ENCODE measurements at regions of chr7 and their contacts with region 1.

Region 1: GRCh38 chr7:34682089-34682488 is 24.1 kb downstream of the NPSR1 start:
- DNase-seq: no peak
- ATAC-seq: no peak
- H3K4me3 ChIP-seq: no peak overlapping the region
- H3K27ac ChIP-seq: no peak overlapping the region
- H3K4me1 ChIP-seq: no peaks in the 10 kb centered on the region
- H3K27me3 ChIP-seq: no peaks in the 10 kb centered on the region
- CTCF ChIP-seq: no peak
- EP300 ChIP-seq: no peak
- POLR2A ChIP-seq: no peak
- RAD21 ChIP-seq: no peak

Region 2: DNA sequence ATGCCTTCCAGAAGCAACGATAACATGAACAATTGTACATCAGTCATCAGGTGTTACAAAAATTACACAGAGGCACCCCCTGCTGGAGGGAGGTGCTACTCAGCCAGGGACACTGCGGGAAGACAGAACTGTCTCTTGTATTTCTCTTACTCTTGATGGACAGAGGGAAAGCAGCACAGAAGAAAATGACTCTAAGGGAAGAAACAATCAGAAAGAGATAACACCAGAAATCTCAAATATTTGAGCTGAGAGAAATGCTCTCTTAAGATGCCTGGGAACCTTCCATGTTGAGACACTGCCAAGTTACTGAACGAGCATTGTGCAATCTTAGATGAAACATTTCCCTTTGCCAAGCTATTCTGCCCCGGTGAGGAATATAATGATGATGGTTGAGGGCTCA is 251.6 kb before region 1 on chr7:
- CTCF ChIA-PET with region 1: no interaction called
- POLR2A ChIA-PET with region 1: no interaction called
- RAD21 ChIA-PET with region 1: no interaction called
- SMC1A ChIA-PET with region 1: no interaction called
- in situ Hi-C with region 1: no loop called
- intact Hi-C with region 1: no loop called
- DNase-seq: no peak
- ATAC-seq: peak; percentile 80
- H3K4me3 ChIP-seq: no peak overlapping the region
- H3K27ac ChIP-seq: no peak overlapping the region
- H3K4me1 ChIP-seq: no peaks in the 10 kb centered on the region
- H3K27me3 ChIP-seq: no peaks in the 10 kb centered on the region
- CTCF ChIP-seq: peak; percentile 18 to 61 (median 43); a peak in 3 of 6 replicates
- EP300 ChIP-seq: no peak
- POLR2A ChIP-seq: no peak
- RAD21 ChIP-seq: peak; percentile 47

Region 3: GRCh38 chr7:34544621-34545020 is 137.5 kb before region 1 on chr7:
- CTCF ChIA-PET with region 1: no interaction called
- POLR2A ChIA-PET with region 1: no interaction called
- RAD21 ChIA-PET with region 1: no interaction called
- SMC1A ChIA-PET with region 1: no interaction called
- in situ Hi-C with region 1: no loop called
- intact Hi-C with region 1: no loop called
- DNase-seq: no peak
- ATAC-seq: no peak
- H3K4me3 ChIP-seq: no peak overlapping the region
- H3K27ac ChIP-seq: no peak overlapping the region
- H3K4me1 ChIP-seq: no peaks in the 10 kb centered on the region
- H3K27me3 ChIP-seq: no peaks in the 10 kb centered on the region
- CTCF ChIP-seq: no peak
- EP300 ChIP-seq: no peak
- POLR2A ChIP-seq: no peak
- RAD21 ChIP-seq: no peak

Region 4: DNA sequence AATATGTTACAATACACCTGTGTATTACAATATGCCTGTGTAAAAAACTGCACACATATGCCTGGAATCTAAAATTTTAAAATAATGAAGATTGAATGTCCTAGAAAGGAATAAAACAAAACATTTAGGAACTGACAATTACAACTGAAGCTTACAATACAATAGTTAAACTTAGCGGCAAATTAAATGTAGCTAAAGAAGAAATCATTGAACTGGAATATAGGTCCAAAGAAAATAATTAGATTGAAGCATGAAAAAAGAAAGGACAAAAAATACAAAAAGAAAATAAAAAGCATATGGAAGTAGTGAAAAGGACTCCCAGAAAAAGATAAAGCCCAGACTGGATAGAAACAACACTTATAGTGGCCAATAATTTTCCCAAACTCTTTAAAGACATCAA is 14.3 kb after region 1 on chr7:
- CTCF ChIA-PET with region 1: interaction called, 4 read pairs
- POLR2A ChIA-PET with region 1: interaction called, 8 read pairs
- RAD21 ChIA-PET with region 1: no interaction called
- SMC1A ChIA-PET with region 1: interaction called, 10 read pairs
- in situ Hi-C with region 1: no loop called
- intact Hi-C with region 1: no loop called
- DNase-seq: no peak
- ATAC-seq: no peak
- H3K4me3 ChIP-seq: no peak overlapping the region
- H3K27ac ChIP-seq: no peak overlapping the region
- H3K4me1 ChIP-seq: no peaks in the 10 kb centered on the region
- H3K27me3 ChIP-seq: no peaks in the 10 kb centered on the region
- CTCF ChIP-seq: no peak
- EP300 ChIP-seq: no peak
- POLR2A ChIP-seq: no peak
- RAD21 ChIP-seq: no peak

Region 5: DNA sequence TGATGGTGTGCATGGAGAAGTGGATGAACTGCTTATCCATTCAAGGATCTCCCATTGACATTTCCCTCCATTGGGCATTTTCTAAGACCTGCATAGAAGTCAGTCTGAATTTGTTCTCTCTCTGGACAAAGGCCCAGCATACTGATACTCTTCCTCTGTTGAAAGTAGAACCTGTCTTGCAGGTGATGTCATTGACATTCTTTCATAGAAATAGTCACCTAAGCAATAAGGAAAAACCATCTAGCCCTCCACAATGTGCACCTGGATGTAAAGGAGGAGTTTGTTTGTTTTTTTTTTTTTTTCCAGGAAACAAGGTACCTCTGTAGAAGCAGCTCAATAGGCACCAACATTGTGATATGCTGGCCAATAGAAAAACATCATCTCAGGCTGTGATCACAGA is 204.8 kb after region 1 on chr7:
- CTCF ChIA-PET with region 1: no interaction called
- POLR2A ChIA-PET with region 1: no interaction called
- RAD21 ChIA-PET with region 1: no interaction called
- SMC1A ChIA-PET with region 1: no interaction called
- in situ Hi-C with region 1: no loop called
- intact Hi-C with region 1: no loop called
- DNase-seq: no peak
- ATAC-seq: no peak
- H3K4me3 ChIP-seq: no peak overlapping the region
- H3K27ac ChIP-seq: no peak overlapping the region
- H3K4me1 ChIP-seq: no peaks in the 10 kb centered on the region
- H3K27me3 ChIP-seq: no peaks in the 10 kb centered on the region; a peak in 1 of 4 replicates
- CTCF ChIP-seq: no peak
- EP300 ChIP-seq: no peak
- POLR2A ChIP-seq: no peak
- RAD21 ChIP-seq: no peak